H1 (cell line): ENCODE measurements at regions of chr11 and their contacts with region 1.

Region 1: GRCh38 chr11:128884703-128885338 is 6.3 kb upstream of the KCNJ5 start:
- DNase-seq: peak in 1 of 2 experiments; percentile 78
- H3K4me3 ChIP-seq: no peak overlapping the region
- H3K27ac ChIP-seq: no peak overlapping the region
- H3K4me1 ChIP-seq: peaks cover 1 to 7% (median 3%) of the 10 kb centered on the region in 4 experiments; a peak in 6 of 7 replicates
- H3K27me3 ChIP-seq: peaks cover 16 to 46% (median 36%) of the 10 kb centered on the region in 4 experiments
- CTCF ChIP-seq: peak; percentile 50 to 79 (median 68)
- EP300 ChIP-seq: no peak
- POLR2A ChIP-seq: no peak
- RAD21 ChIP-seq: peak; percentile 91 to 94

Region 2: GRCh38 chr11:128868841-128869580 is 15.8 kb before region 1 on chr11:
- CTCF ChIA-PET with region 1: interaction called, 35 read pairs
- POLR2A ChIA-PET with region 1: no interaction called
- DNase-seq: no peak
- H3K4me3 ChIP-seq: no peak overlapping the region
- H3K27ac ChIP-seq: no peak overlapping the region
- H3K4me1 ChIP-seq: peaks cover 17 to 35% (median 23%) of the 10 kb centered on the region in 4 experiments
- H3K27me3 ChIP-seq: peaks cover 0 to 8% (median 7%) of the 10 kb centered on the region in 4 experiments; a peak in 3 of 7 replicates
- CTCF ChIP-seq: no peak
- EP300 ChIP-seq: no peak
- POLR2A ChIP-seq: no peak
- RAD21 ChIP-seq: no peak

Region 3: GRCh38 chr11:128874427-128874826 is 10.4 kb before region 1 on chr11:
- CTCF ChIA-PET with region 1: interaction called, 35 read pairs
- POLR2A ChIA-PET with region 1: no interaction called
- DNase-seq: no peak
- H3K4me3 ChIP-seq: no peak overlapping the region
- H3K27ac ChIP-seq: no peak overlapping the region
- H3K4me1 ChIP-seq: peaks cover 17 to 35% (median 23%) of the 10 kb centered on the region in 4 experiments
- H3K27me3 ChIP-seq: peaks cover 0 to 11% (median 7%) of the 10 kb centered on the region in 4 experiments; a peak in 5 of 7 replicates
- CTCF ChIP-seq: no peak
- EP300 ChIP-seq: no peak
- POLR2A ChIP-seq: no peak
- RAD21 ChIP-seq: no peak

Region 4: DNA sequence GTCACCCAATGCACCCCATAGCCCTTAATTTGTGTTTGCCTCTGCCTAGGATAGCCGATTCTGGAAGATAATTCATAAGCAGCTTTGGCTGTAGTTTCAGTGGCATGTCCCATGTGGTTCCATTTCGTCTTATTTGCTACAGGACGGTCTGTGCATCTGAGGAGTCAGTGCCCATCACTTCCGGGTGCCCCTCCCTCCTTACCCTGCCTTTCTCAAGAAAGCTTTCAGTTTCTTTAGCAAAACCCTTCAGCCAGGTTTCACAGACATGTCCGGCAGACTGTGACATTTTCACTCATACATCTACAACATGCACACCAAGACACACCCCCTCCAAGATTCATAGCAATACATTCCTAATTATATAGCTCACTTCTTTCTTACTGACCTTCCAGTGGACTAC is 43.6 kb after region 1 on chr11:
- CTCF ChIA-PET with region 1: interaction called, 243 read pairs
- POLR2A ChIA-PET with region 1: no interaction called
- DNase-seq: no peak
- H3K4me3 ChIP-seq: no peak overlapping the region
- H3K27ac ChIP-seq: no peak overlapping the region
- H3K4me1 ChIP-seq: peaks cover 5 to 41% (median 17%) of the 10 kb centered on the region in 4 experiments
- H3K27me3 ChIP-seq: peaks cover 2 to 50% (median 42%) of the 10 kb centered on the region in 4 experiments
- CTCF ChIP-seq: no peak
- EP300 ChIP-seq: no peak
- POLR2A ChIP-seq: no peak
- RAD21 ChIP-seq: no peak

Region 5: GRCh38 chr11:128936606-128937251 is 51.9 kb after region 1 on chr11:
- CTCF ChIA-PET with region 1: interaction called, 243 read pairs
- POLR2A ChIA-PET with region 1: no interaction called
- DNase-seq: peak; percentile 39 to 65
- H3K4me3 ChIP-seq: no peak overlapping the region
- H3K27ac ChIP-seq: peak overlapping the region; percentile 46
- H3K4me1 ChIP-seq: peaks cover 0 to 12% (median 9%) of the 10 kb centered on the region in 4 experiments; a peak in 6 of 7 replicates
- H3K27me3 ChIP-seq: peaks cover 0 to 20% (median 10%) of the 10 kb centered on the region in 4 experiments; a peak in 6 of 7 replicates
- CTCF ChIP-seq: peak; percentile 7 to 27 (median 20); a peak in 3 of 4 replicates
- EP300 ChIP-seq: peak in 1 of 2 experiments; percentile 80; a peak in 1 of 3 replicates
- POLR2A ChIP-seq: peak in 1 of 2 experiments; percentile 38; a peak in 1 of 3 replicates
- RAD21 ChIP-seq: peak; percentile 40 to 44; a peak in 3 of 4 replicates

Region 6: DNA sequence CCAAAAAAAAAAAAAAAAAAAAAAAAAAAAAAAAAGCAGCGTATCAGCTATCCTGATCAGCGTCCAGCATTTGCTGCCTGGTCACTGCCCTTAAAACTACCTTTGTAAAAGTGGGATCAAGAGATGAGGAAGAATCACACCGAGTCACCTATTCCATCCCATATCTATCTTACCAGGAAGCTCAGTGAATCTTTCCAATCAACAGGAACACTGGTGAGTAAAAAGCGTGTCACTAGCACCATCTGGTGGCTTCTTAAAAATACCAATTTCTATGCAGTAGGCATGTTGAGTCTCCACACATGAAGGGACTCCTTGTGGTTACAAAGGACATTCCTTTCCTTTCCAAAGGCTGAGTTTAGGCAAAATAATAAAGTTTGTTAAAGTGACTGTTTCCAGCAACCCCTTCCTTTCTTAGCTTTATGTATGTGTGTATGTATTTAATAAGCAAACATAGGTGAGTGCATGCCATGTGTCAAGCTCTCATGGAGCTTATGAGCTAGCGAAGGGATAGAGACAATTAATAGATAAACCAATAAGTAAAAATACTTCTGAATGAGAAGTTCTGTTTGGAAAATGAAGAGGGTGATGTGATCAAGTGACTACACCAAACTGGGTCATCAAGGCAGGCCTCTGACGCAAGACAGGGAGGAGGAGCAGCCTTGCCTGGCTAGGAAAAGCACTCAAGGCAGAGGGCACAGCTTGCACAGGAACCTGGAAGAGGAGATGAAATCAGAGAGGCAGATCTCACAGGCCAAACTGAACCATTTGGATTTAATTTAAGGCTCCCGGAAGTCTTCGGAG is 71.8 kb after region 1 on chr11:
- CTCF ChIA-PET with region 1: interaction called, 473 read pairs
- POLR2A ChIA-PET with region 1: interaction called, 4 read pairs
- DNase-seq: no peak
- H3K4me3 ChIP-seq: no peak overlapping the region
- H3K27ac ChIP-seq: no peak overlapping the region
- H3K4me1 ChIP-seq: no peaks in the 10 kb centered on the region
- H3K27me3 ChIP-seq: peaks cover 0 to 2% (median 0%) of the 10 kb centered on the region in 4 experiments; a peak in 2 of 7 replicates
- CTCF ChIP-seq: peak in 2 of 3 experiments; percentile 79 to 86; a peak in 3 of 4 replicates
- EP300 ChIP-seq: no peak
- POLR2A ChIP-seq: no peak
- RAD21 ChIP-seq: peak; percentile 89 to 90